ENCODE measurements at regions of chr5 and their contacts with region 1.

Region 1: GRCh38 chr5:67149951-67150523 is 46.6 kb downstream of the CD180 start:
- DNase-seq: no peak
- H3K4me3 ChIP-seq: peak overlapping the region in 53 of 59 donors; percentile 0 to 58 (median 37)
- H3K27ac ChIP-seq: peak overlapping the region in 11 of 59 donors; percentile 0 to 46 (median 14)
- H3K27me3 ChIP-seq: no peaks in the 10 kb centered on the region
- CTCF ChIP-seq: peak; percentile 20 to 83 (median 67)

Region 2: GRCh38 chr5:66987949-66988838 is 161.8 kb before region 1 on chr5:
- intact Hi-C with region 1: loop called in 1 of 2 experiments (anchors 5 kb)
- DNase-seq: no peak
- H3K4me3 ChIP-seq: no peak overlapping the region
- H3K27ac ChIP-seq: peak overlapping the region in 20 of 59 donors; percentile 3 to 56 (median 24)
- H3K27me3 ChIP-seq: no peaks in the 10 kb centered on the region
- CTCF ChIP-seq: peak; percentile 59 to 90 (median 78)

Region 3: GRCh38 chr5:67073045-67073680 is 76.9 kb before region 1 on chr5:
- intact Hi-C with region 1: no loop called
- DNase-seq: no peak
- H3K4me3 ChIP-seq: no peak overlapping the region
- H3K27ac ChIP-seq: no peak overlapping the region
- H3K27me3 ChIP-seq: no peaks in the 10 kb centered on the region
- CTCF ChIP-seq: no peak